ENCODE measurements at regions of chr12 and their contacts with region 1.

Region 1: GRCh38 chr12:132083941-132084620 is 60.0 kb downstream of the DDX51 start:
- DNase-seq: peak; percentile 86
- H3K4me3 Mint-ChIP-seq: peak overlapping the region; percentile 97
- H3K27ac Mint-ChIP-seq: peak overlapping the region; percentile 97
- H3K4me1 Mint-ChIP-seq: peaks cover 19% of the 10 kb centered on the region
- H3K27me3 Mint-ChIP-seq: no peaks in the 10 kb centered on the region

Region 2: DNA sequence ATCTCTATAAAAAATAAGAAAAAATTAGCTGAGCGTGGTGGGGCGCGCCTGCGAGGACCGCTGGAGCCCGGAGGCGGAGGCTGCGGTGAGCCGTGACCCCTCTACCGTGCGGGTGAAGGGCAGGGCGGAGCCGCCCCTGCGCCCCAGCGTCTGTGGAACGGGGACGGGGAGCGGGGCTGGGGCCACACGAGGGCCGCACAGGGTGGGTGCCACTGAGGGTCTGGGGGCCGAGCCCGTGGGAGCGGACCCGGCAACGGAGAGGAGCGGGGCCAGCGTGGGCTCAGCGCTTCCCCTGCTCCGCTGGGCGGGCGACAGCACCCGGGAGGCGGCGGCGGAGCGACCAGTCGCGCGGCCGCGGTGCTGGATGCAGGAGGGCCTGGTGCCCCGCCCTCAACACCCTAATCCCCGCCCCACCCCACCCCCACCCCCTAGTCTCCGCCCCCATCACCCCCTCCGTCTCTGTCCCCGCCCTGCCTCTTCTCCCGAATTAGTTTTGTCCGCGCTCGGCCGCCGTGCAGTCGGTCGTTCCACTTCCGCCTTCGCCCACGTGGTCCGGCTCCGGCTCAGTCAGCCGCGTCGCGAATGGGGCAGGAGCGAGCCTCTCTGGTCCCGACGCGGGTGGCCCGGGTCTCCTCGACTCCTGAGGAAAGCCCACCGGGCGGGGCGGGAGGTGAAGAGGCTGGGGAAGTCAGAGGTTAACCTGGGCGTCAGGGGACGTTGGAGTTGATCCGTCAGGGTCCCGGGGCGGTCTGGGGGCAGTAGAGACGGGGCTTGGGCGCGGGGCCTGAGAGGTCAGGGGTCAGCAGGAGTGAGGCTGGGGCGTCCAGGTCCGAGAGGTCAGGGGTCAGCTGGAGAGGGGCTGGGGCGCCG is 155.1 kb before region 1 on chr12 and contains the start of gene PUS1:
- intact Hi-C with region 1: loop called (anchors 1 kb)
- DNase-seq: peak; percentile 92
- H3K4me3 Mint-ChIP-seq: peak within 1 kb of the TSS; percentile 98
- H3K27ac Mint-ChIP-seq: peak within 1 kb of the TSS; percentile 92
- H3K4me1 Mint-ChIP-seq: peaks cover 17% of the 10 kb centered on the region
- H3K27me3 Mint-ChIP-seq: no peaks in the 10 kb centered on the region
- total RNA-seq, gene PUS1: 71.2 and 79.2 TPM in 2 replicates

Region 3: GRCh38 chr12:132021031-132021871 is 62.8 kb before region 1 on chr12:
- intact Hi-C with region 1: no loop called
- DNase-seq: no peak
- H3K4me3 Mint-ChIP-seq: no peak overlapping the region
- H3K27ac Mint-ChIP-seq: no peak overlapping the region
- H3K4me1 Mint-ChIP-seq: no peaks in the 10 kb centered on the region
- H3K27me3 Mint-ChIP-seq: no peaks in the 10 kb centered on the region

Region 4: DNA sequence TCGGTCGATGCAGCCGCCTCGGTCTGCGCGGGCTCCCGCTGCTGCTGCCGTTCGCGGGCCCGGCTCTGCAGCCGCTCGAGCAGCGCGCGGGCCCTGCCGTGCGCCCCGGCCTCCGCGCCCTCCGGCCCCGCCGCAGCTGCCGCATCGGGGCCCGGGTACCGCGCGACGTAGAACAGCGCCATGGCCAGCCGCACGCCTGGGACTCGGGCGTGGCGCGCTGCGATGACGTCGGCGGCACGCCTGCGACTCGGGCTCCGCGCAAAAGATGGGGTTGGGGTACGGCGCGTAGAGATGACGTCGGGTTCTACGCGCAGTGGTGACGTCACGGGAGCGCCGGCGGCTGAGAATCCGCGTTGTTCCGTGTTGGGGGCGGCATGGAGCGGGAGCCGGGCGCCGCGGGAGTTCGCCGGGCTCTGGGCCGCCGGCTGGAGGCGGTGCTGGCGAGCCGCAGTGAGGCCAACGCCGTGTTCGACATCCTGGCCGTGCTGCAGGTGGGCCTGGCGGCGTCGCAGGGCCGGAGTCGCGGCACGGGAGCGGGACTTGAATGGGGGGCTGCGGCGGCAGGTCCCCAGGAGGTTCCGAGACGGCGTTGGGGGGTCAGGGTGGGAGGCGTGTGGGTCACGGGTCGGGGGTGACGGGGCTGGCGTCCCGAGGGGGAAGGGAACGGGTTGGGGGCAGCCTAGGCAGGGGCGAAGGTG is 60.2 kb after region 1 on chr12 and contains the starts of genes DDX51 and NOC4L:
- intact Hi-C with region 1: loop called (anchors 5 kb)
- DNase-seq: peak; percentile 95
- H3K4me3 Mint-ChIP-seq: peak within 1 kb of the TSS; percentile 88
- H3K27ac Mint-ChIP-seq: peak within 1 kb of the TSS; percentile 93
- H3K4me1 Mint-ChIP-seq: peaks cover 16% of the 10 kb centered on the region
- H3K27me3 Mint-ChIP-seq: no peaks in the 10 kb centered on the region
- total RNA-seq, gene DDX51: 36.7 and 37.6 TPM in 2 replicates
- total RNA-seq, gene NOC4L: 39.3 and 39.8 TPM in 2 replicates

Region 5: DNA sequence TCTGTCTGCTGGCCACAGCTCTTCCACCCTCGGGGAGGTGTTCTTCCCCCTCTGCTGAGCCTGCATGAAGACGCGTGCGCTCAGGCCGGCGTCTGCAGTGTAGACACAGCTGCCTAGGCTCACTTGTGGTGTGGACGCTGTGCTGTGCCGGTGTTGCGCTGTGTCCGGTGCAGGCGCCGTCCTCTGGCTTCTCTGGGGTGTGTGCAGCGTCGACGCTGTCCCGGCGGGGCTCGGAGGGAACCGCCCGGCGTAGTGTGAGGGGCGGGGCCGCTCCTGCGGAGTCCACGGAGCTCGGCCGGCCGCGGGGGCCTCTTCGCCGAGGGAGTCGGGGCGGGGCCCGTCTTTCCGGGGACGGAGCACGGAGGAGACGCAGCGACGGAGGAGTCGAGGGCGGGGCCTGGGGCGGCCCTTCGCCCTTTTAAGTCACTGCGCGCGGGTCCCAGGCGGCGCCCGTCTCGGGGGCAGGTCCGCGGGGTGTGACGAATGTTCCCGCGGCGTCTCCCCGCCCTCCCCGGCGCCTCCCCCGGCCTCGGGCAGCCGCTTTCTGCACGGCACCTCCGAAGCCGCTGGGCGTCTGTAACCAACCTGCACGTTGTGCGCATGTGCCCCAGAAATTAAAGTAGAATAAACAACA is 105.4 kb after region 1 on chr12:
- intact Hi-C with region 1: loop called (anchors 1 kb)
- DNase-seq: peak; percentile 93
- H3K4me3 Mint-ChIP-seq: peak overlapping the region; percentile 93
- H3K27ac Mint-ChIP-seq: peak overlapping the region; percentile 82
- H3K4me1 Mint-ChIP-seq: peaks cover 27% of the 10 kb centered on the region
- H3K27me3 Mint-ChIP-seq: peaks cover 7% of the 10 kb centered on the region

Measured in activated T-helper 2 cell treated with anti-CD3 and anti-CD28 coated beads, Interferon-gamma antibody, Interleukin-2, Interleukin-4, amounts not matched to agents 10 μg/mL and 5 μg/mL and 100 μg/mL, durations not matched to agents 14 hours and 24 hours and 36 hours (primary cell).